Mammary epithelial cell (primary cell): ENCODE measurements at regions of chr17 and their contacts with region 1.

Region 1: GRCh38 chr17:75904749-75905521 is at the start of gene MRPL38:
- DNase-seq: peak; percentile 96
- H3K4me3 ChIP-seq: peak within 1 kb of the TSS; percentile 78 to 95 (median 79)
- H3K27ac ChIP-seq: peak within 1 kb of the TSS; percentile 51
- H3K4me1 ChIP-seq: peaks cover 20% of the 10 kb centered on the region
- H3K27me3 ChIP-seq: no peaks in the 10 kb centered on the region
- CTCF ChIP-seq: peak; percentile 54 to 96
- total RNA-seq, gene MRPL38: 24.0 to 67.6 TPM

Region 2: GRCh38 chr17:75625813-75626486 is 279.0 kb before region 1 on chr17:
- CTCF ChIA-PET with region 1: no interaction called
- dilution Hi-C with region 1: no loop called
- in situ Hi-C with region 1: no loop called
- intact Hi-C with region 1: no loop called
- DNase-seq: no peak
- H3K4me3 ChIP-seq: no peak overlapping the region
- H3K27ac ChIP-seq: no peak overlapping the region
- H3K4me1 ChIP-seq: no peaks in the 10 kb centered on the region
- H3K27me3 ChIP-seq: no peaks in the 10 kb centered on the region
- CTCF ChIP-seq: peak; percentile 56 to 57

Region 3: GRCh38 chr17:75693500-75694481 is 211.1 kb before region 1 on chr17:
- CTCF ChIA-PET with region 1: no interaction called
- dilution Hi-C with region 1: no loop called
- in situ Hi-C with region 1: no loop called
- intact Hi-C with region 1: no loop called
- DNase-seq: peak; percentile 93
- H3K4me3 ChIP-seq: no peak overlapping the region
- H3K27ac ChIP-seq: peak overlapping the region; percentile 90
- H3K4me1 ChIP-seq: peaks cover 97% of the 10 kb centered on the region
- H3K27me3 ChIP-seq: no peaks in the 10 kb centered on the region
- CTCF ChIP-seq: peak; percentile 2 to 31

Region 4: GRCh38 chr17:75864448-75864871 is 40.5 kb before region 1 on chr17:
- CTCF ChIA-PET with region 1: no interaction called
- dilution Hi-C with region 1: loop called (anchors 5 kb)
- in situ Hi-C with region 1: no loop called
- intact Hi-C with region 1: no loop called
- DNase-seq: no peak
- H3K4me3 ChIP-seq: no peak overlapping the region
- H3K27ac ChIP-seq: no peak overlapping the region
- H3K4me1 ChIP-seq: peaks cover 6% of the 10 kb centered on the region
- H3K27me3 ChIP-seq: no peaks in the 10 kb centered on the region
- CTCF ChIP-seq: no peak

Region 5: DNA sequence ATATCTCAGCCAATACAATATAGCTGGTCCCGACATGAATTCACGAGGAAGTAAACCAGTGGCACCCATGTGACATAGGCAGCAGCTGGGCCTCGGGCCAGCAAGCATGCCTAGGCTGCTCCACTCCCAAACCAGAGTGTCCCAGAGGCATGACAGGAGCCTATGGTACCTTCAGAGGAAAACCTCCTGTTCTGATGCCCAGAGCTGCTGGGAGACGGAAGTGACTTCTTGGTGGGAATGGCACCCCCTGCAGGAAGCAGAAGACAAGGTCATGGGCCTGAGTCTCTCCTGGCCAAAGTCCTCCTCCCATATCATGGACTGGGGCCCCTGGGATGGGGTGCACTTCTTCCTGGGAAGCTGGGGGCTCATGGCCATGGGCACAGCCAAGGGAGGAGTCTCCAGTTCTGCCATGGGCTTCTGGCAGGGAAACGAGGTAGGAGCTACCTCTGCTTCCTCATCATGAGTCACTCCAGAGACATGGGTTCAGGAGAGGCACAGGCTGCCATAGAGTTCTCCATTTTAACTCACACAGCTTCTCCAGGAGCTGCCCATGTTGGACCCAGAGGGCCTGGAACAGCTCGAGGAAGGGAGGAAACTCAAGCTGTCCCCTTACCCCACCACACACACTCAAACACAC is 22.5 kb after region 1 on chr17:
- CTCF ChIA-PET with region 1: no interaction called
- dilution Hi-C with region 1: no loop called
- in situ Hi-C with region 1: no loop called
- intact Hi-C with region 1: loop called (anchors 1 kb)
- DNase-seq: peak; percentile 9
- H3K4me3 ChIP-seq: no peak overlapping the region
- H3K27ac ChIP-seq: no peak overlapping the region
- H3K4me1 ChIP-seq: peaks cover 9% of the 10 kb centered on the region
- H3K27me3 ChIP-seq: no peaks in the 10 kb centered on the region
- CTCF ChIP-seq: peak in 1 of 2 donors; percentile 47

Region 6: DNA sequence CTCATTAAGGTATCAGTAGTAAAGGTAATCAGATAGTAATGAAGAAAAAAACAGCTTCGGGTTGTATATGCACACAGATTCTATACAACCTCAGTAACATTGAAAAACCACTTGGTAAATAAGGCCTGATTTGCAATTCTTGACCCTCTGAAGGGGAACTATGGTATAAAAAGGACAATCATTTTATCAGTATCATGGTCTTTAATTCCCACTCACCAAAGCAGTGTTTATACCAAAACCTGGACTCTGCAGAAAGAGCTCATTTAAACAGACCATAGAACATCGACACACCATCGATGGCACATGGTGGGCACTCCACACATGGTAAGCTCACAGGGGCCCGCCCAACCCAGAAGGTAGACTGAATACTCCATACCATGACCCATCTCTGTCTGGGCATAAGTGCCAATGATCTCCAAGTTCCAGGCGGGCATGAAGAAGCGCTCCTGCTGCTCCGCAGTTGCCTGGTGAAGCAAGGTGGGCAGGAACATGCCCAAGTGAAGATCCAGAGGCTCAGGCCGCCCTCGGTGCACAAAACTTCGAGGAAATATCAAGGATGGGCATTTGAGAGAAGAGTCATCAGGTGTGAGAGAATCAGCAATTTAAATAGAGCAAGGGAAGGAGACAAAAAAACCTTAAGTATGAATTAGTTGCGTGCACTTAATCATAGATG is 55.0 kb after region 1 on chr17:
- CTCF ChIA-PET with region 1: no interaction called
- dilution Hi-C with region 1: no loop called
- in situ Hi-C with region 1: no loop called
- intact Hi-C with region 1: no loop called
- DNase-seq: no peak
- H3K4me3 ChIP-seq: no peak overlapping the region
- H3K27ac ChIP-seq: no peak overlapping the region
- H3K4me1 ChIP-seq: no peaks in the 10 kb centered on the region
- H3K27me3 ChIP-seq: no peaks in the 10 kb centered on the region
- CTCF ChIP-seq: no peak

Region 7: DNA sequence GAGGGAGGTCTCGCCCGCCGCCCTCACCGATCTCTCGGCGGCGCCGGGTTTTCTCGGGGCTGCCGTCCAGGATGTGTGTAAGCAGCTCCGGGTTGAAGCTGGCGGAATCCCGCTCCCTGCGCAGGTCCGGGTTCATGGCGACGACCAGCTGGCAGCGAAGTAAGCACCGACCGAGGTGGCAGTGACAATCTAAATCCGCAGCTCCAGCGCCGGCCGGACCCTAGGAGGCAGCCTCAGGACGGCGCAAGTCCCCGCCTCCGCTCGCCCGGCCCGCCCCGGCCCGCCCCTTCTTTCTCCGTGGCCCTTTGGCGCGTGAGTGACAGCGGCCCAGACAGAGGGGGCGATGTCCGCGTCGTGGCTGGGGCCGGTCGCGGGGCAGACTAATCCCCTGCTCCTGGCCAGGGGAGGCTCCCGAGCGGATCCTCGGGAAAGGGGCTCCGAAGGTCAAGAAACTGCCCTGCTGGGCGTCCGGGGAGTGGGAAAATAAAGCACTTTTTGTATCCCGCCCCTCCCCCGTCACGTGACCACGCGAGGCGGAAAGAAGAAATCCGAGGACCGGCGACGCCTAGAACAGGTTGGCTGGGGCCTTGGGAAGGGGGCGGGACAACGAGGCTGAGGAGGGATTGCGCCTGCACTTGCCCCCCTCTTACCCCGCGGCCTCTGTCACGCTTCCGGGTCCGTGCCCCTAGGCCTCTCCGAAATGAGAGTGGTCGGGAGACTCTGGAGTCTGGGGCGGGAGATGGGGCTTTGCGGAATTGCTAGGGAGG is 74.2 kb after region 1 on chr17 and contains the starts of genes ACOX1 and TEN1:
- CTCF ChIA-PET with region 1: no interaction called
- dilution Hi-C with region 1: no loop called
- in situ Hi-C with region 1: no loop called
- intact Hi-C with region 1: loop called (anchors 1 kb)
- DNase-seq: peak; percentile 94
- H3K4me3 ChIP-seq: peak within 1 kb of the TSS; percentile 68 to 90 (median 87)
- H3K27ac ChIP-seq: peak within 1 kb of the TSS; percentile 91
- H3K4me1 ChIP-seq: peaks cover 13% of the 10 kb centered on the region
- H3K27me3 ChIP-seq: no peaks in the 10 kb centered on the region
- CTCF ChIP-seq: peak in 1 of 2 donors; percentile 37
- total RNA-seq, gene ACOX1: 37.7 to 88.0 TPM
- total RNA-seq, gene TEN1: 17.5 to 18.3 TPM

Region 8: GRCh38 chr17:76005263-76006149 is 100.6 kb after region 1 on chr17:
- CTCF ChIA-PET with region 1: interaction called, 3 read pairs
- dilution Hi-C with region 1: no loop called
- in situ Hi-C with region 1: loop called (anchors 5 kb)
- intact Hi-C with region 1: loop called (anchors 1 kb)
- DNase-seq: peak; percentile 62
- H3K4me3 ChIP-seq: no peak overlapping the region
- H3K27ac ChIP-seq: no peak overlapping the region
- H3K4me1 ChIP-seq: no peaks in the 10 kb centered on the region
- H3K27me3 ChIP-seq: no peaks in the 10 kb centered on the region
- CTCF ChIP-seq: peak; percentile 45 to 76

Region 9: GRCh38 chr17:76103274-76104139 is 198.6 kb after region 1 on chr17 and contains the start of gene EXOC7:
- CTCF ChIA-PET with region 1: no interaction called
- dilution Hi-C with region 1: no loop called
- in situ Hi-C with region 1: no loop called
- intact Hi-C with region 1: loop called (anchors 10 kb)
- DNase-seq: peak; percentile 83
- H3K4me3 ChIP-seq: peak within 1 kb of the TSS; percentile 46 to 80 (median 73)
- H3K27ac ChIP-seq: peak within 1 kb of the TSS; percentile 45
- H3K4me1 ChIP-seq: peaks cover 9% of the 10 kb centered on the region
- H3K27me3 ChIP-seq: no peaks in the 10 kb centered on the region
- CTCF ChIP-seq: peak in 1 of 2 donors; percentile 33
- total RNA-seq, gene EXOC7: 102 to 111 TPM

Region 10: DNA sequence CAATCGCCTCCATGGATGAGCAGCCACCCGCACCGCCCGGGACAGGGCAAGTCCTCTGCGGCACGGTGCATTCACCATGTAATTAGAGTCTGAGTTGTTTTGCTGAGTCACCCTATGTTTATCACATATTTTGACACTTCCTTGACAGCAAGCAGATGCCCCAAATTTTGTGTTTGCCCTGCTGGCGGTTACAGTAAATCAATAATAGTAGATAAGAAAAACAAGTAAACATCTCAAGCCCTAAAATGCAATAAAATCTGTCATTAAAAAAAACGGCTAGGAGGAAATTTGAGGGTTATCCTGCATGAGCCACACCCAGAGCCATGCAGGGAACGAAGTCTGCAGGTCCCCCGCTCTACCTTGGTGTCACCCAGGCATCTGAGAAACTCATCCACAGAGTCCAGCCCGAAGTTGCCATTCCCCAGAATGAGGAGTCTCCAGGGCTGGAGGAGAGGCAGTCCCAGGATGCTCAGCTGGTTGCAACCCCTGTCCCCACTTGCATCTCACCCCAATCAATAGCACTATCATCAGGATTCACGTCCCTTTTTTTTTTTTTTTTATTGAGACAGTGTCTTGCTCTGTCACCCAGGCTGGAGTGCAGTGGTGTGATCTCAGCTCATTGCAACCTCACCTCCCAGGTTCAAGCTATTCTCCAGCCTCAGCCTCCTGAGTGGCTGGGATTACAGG is 755.1 kb after region 1 on chr17:
- CTCF ChIA-PET with region 1: no interaction called
- dilution Hi-C with region 1: no loop called
- in situ Hi-C with region 1: no loop called
- intact Hi-C with region 1: no loop called
- DNase-seq: no peak
- H3K4me3 ChIP-seq: no peak overlapping the region
- H3K27ac ChIP-seq: no peak overlapping the region
- H3K4me1 ChIP-seq: no peaks in the 10 kb centered on the region
- H3K27me3 ChIP-seq: no peaks in the 10 kb centered on the region
- CTCF ChIP-seq: no peak